PC-9 (cell line): ENCODE measurements at regions of chr18 and their contacts with region 1.

Region 1: GRCh38 chr18:13070460-13070859 is 79.3 kb downstream of the CEP192 start:
- DNase-seq: no peak
- H3K4me3 ChIP-seq: no peak overlapping the region
- H3K27ac ChIP-seq: no peak overlapping the region
- H3K4me1 ChIP-seq: no peaks in the 10 kb centered on the region
- H3K27me3 ChIP-seq: no peaks in the 10 kb centered on the region
- CTCF ChIP-seq: no peak

Region 2: DNA sequence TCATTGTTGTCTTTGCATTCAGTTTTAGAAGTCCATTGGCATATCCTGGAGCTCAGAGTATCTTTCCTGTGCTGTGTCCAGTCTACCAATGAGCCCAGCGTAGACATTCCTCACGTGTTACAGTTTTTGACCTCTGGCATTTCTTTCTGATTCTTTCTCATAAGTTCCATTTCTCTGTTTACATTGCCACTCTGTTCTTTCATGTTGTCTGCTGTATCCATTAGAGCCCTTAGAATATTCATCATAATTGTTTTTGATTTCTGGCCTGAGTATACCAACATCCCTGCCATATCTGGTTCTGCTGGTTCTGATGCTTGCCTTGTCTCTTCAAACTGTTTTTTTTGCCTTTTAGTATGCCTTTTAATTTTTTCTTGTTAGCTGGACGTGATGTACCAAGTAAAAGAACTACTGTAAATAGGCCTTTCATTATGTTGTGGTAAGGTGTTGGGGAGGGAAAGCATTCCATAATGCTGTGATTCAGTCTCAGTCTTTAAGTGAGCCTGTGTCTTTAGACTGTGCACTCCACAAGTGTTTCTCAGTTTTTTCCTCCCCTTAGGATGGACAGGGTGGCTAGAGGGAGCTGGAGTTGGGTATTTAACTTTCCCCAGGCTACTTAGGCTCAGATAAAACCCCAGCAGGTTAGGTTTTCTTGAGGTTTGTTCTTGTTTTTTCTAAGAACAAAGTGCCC is 43.7 kb before region 1 on chr18:
- CTCF ChIA-PET with region 1: no interaction called
- POLR2A ChIA-PET with region 1: no interaction called
- intact Hi-C with region 1: loop called (anchors 10 kb)
- DNase-seq: no peak
- H3K4me3 ChIP-seq: no peak overlapping the region
- H3K27ac ChIP-seq: no peak overlapping the region
- H3K4me1 ChIP-seq: no peaks in the 10 kb centered on the region
- H3K27me3 ChIP-seq: no peaks in the 10 kb centered on the region
- CTCF ChIP-seq: no peak